ENCODE measurements at regions of chr11 and their contacts with region 1.

Region 1: GRCh38 chr11:57761301-57762234 is at the start of gene CTNND1:
- DNase-seq: peak; percentile 77
- ATAC-seq: peak; percentile 89
- H3K4me3 ChIP-seq: peak within 1 kb of the TSS; percentile 70
- H3K27ac ChIP-seq: peak within 1 kb of the TSS; percentile 92
- H3K4me1 ChIP-seq: no peaks in the 10 kb centered on the region
- H3K27me3 ChIP-seq: no peaks in the 10 kb centered on the region
- CTCF ChIP-seq: no peak
- EP300 ChIP-seq: no peak
- POLR2A ChIP-seq: peak; percentile 67; the same call in 1 of the 2 replicates
- RAD21 ChIP-seq: no peak
- polyA plus RNA-seq, gene CTNND1: 4.7 to 6.5 TPM

Region 2: DNA sequence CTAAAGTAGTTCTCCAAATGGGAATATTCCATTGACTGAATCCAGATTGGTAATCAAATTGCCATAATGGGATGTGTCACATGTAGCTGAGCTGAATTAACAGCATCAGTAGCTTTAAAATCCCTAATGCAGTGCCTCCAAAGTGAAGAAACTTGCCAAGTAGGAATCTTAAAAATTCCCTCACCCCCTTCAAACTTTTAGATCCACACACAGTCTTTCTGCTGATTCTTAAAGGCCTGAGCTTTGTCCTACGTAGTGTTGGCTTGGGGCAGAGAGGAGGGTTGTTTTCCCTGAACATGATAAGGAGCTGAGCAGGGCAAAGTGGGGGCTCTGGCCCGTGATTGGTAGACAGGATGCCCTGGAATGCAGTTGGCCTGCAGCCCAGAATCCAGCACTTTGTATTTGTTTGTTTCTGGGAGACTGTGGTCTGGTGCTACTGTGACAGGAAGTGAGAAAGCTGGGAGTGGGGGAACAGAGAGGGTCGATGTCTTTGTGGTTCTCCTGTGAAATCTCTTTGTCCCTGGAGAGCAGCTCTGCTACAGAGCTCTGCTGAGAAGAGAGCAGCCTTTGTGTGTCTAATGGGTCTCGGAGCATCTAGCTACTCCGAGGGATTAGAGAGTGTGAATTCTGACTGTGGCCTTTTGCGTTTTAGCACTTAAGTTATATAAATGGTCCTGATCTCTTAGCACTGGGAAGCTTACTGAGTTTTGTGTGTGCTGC is 16.9 kb after region 1 on chr11:
- CTCF ChIA-PET with region 1: interaction called, 38 read pairs
- POLR2A ChIA-PET with region 1: interaction called, 110 read pairs
- RAD21 ChIA-PET with region 1: interaction called, 41 read pairs
- SMC1A ChIA-PET with region 1: interaction called, 197 read pairs
- in situ Hi-C with region 1: no loop called
- intact Hi-C with region 1: no loop called
- DNase-seq: no peak
- ATAC-seq: peak; percentile 31
- H3K4me3 ChIP-seq: 0 out of 2 replicates have a peak overlapping the region, but pooled peaks have one; percentile 24
- H3K27ac ChIP-seq: no peak overlapping the region
- H3K4me1 ChIP-seq: peaks cover 13% of the 10 kb centered on the region
- H3K27me3 ChIP-seq: no peaks in the 10 kb centered on the region
- CTCF ChIP-seq: no peak
- EP300 ChIP-seq: no peak
- POLR2A ChIP-seq: no peak
- RAD21 ChIP-seq: no peak

Region 3: DNA sequence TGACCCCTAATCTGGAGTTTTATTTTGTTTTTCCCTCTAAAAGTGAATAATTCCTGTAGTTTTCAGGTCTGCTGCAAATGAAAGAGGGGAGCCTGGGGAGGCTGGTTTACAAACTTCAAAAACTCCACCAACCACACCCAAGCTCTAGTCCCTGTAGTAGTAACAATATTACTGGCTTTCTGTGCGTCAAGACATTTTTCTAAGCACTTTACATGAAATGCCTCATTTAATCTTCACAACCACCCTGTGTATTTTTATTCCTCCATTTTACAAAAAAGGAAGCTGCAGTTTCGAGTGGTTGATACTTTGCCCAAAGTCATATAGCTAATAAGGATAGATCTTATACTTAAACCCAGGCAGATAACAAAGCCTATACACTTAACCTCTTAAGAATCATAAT is 23.5 kb after region 1 on chr11:
- CTCF ChIA-PET with region 1: interaction called, 62 read pairs
- POLR2A ChIA-PET with region 1: interaction called, 110 read pairs
- RAD21 ChIA-PET with region 1: interaction called, 73 read pairs
- SMC1A ChIA-PET with region 1: interaction called, 197 read pairs
- in situ Hi-C with region 1: no loop called
- intact Hi-C with region 1: no loop called
- DNase-seq: no peak
- ATAC-seq: peak; percentile 79
- H3K4me3 ChIP-seq: no peak overlapping the region
- H3K27ac ChIP-seq: peak overlapping the region; percentile 73
- H3K4me1 ChIP-seq: peaks cover 34% of the 10 kb centered on the region
- H3K27me3 ChIP-seq: no peaks in the 10 kb centered on the region
- CTCF ChIP-seq: no peak
- EP300 ChIP-seq: peak in 1 of 2 experiments; percentile 29; a peak in 1 of 4 replicates
- POLR2A ChIP-seq: no peak
- RAD21 ChIP-seq: no peak

Region 4: DNA sequence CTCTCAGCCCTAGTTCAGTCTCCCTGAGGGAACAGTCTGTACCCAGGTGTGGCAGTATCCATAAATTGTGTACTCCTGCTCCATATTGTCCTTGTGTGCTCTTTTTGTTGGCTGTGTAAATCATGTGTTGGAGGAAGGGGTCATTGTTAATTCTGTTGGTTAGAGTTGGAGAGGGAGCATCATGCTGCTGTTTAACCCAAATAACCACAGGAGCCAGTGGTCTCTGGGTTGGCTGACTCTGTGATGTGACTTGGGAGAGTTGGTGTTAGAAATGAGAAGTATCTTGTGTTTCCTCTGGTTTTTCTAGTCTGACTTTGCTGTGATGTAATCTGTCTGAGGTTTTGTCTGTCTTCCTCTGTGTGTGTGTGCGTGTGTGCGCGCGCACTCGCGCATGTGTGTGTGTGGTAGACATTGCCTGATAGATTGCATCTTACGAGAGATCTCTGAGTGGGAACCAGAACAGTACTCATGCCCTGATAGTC is 30.5 kb after region 1 on chr11:
- CTCF ChIA-PET with region 1: interaction called, 62 read pairs
- POLR2A ChIA-PET with region 1: interaction called, 9 read pairs
- RAD21 ChIA-PET with region 1: interaction called, 73 read pairs
- SMC1A ChIA-PET with region 1: interaction called, 197 read pairs
- in situ Hi-C with region 1: no loop called
- intact Hi-C with region 1: loop called (anchors 2 kb)
- DNase-seq: peak; percentile 93
- ATAC-seq: peak; percentile 92
- H3K4me3 ChIP-seq: peak overlapping the region; percentile 34; the same call in 1 of the 2 replicates
- H3K27ac ChIP-seq: peak overlapping the region; percentile 52
- H3K4me1 ChIP-seq: peaks cover 42% of the 10 kb centered on the region
- H3K27me3 ChIP-seq: no peaks in the 10 kb centered on the region
- CTCF ChIP-seq: no peak
- EP300 ChIP-seq: peak; percentile 49 to 81; a peak in 3 of 4 replicates
- POLR2A ChIP-seq: peak; percentile 62; the same call in 1 of the 2 replicates
- RAD21 ChIP-seq: no peak

Measured in GM12878 (cell line).